K562 (cell line): ENCODE measurements at regions of chr3 and their contacts with region 1.

Region 1: GRCh38 chr3:101195951-101196713 is 124.2 kb downstream of the IMPG2 start:
- DNase-seq: peak in 2 of 4 experiments; percentile 15 to 43
- ATAC-seq: peak; percentile 72
- H3K4me3 ChIP-seq: no peak overlapping the region
- H3K27ac ChIP-seq: no peak overlapping the region
- H3K4me1 ChIP-seq: no peaks in the 10 kb centered on the region
- H3K27me3 ChIP-seq: no peaks in the 10 kb centered on the region
- CTCF ChIP-seq: peak; percentile 32 to 69 (median 43); a peak in 3 of 6 replicates
- EP300 ChIP-seq: no peak
- POLR2A ChIP-seq: no peak
- RAD21 ChIP-seq: peak; percentile 91 to 96

Region 2: GRCh38 chr3:100893590-100893989 is 302.5 kb before region 1 on chr3:
- CTCF ChIA-PET with region 1: interaction called, 3 read pairs
- POLR2A ChIA-PET with region 1: no interaction called
- in situ Hi-C with region 1: no loop called
- intact Hi-C with region 1: loop called (anchors 5 kb)
- DNase-seq: peak in 1 of 4 experiments; percentile 7
- ATAC-seq: peak; percentile 33; the same call in 1 of the 3 replicates
- H3K4me3 ChIP-seq: no peak overlapping the region
- H3K27ac ChIP-seq: no peak overlapping the region
- H3K4me1 ChIP-seq: no peaks in the 10 kb centered on the region
- H3K27me3 ChIP-seq: 0 out of 5 replicates have a peak, but pooled peaks cover 0 to 2% of the 10 kb centered on the region in 2 experiments
- CTCF ChIP-seq: peak in 2 of 3 experiments; percentile 47 to 55; a peak in 3 of 6 replicates
- EP300 ChIP-seq: no peak
- POLR2A ChIP-seq: no peak
- RAD21 ChIP-seq: peak; percentile 66 to 75